Posterior vena cava (tissue), 2 donors: ENCODE measurements at regions of chr10 and their contacts with region 1.

Region 1: DNA sequence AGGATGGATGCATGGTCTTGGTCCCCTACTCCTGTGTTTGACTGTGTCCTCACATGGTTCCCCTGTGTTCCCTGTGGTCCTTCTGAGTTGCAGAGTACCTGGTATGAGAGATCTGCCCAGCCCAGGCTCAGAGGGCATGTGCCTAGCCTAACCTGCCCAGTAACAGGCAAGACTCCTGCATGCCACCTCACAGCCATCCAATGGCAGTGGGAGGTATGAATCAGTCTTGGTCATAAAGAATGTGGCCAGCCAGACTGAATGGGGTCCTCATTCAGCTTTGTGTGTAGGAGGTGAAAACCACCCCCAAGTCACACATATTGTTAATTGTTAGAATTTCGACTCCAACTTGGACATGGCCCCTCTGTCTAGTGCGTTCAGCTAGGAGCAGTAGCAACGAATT is 17.2 kb upstream of the GPR158 start:
- DNase-seq: no peak

Region 2: DNA sequence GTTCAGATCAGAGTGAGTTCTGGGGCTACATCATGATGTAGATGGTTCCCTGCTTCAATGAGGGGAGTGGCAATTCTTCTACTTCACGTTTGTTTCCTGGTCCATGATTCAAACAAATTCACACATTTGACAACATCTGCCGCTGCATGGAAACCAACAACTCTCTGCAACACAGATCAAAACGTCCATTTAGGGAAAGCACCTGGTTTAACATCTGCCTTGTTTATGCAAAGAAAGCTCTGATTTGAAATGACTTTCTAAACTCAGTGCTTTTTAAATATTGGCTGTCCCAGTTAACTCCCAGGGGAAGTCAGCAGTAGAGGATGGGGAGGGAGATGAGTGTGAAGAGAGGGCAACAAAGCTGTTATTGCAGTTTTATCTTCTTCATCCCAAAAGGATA is 1152.7 kb after region 1 on chr10:
- intact Hi-C with region 1: loop called in 1 of 2 experiments (anchors 5 kb)
- DNase-seq: no peak